ENCODE measurements at regions of chr7 and their contacts with region 1.

Region 1: GRCh38 chr7:142782922-142783900 is 12.4 kb downstream of the PRSS2 start:
- DNase-seq: peak; percentile 88
- ATAC-seq: peak; percentile 95
- H3K4me3 ChIP-seq: peak overlapping the region; percentile 28
- H3K27ac ChIP-seq: no peak overlapping the region
- H3K4me1 ChIP-seq: no peaks in the 10 kb centered on the region
- H3K27me3 ChIP-seq: no peaks in the 10 kb centered on the region
- CTCF ChIP-seq: peak; percentile 89

Region 2: DNA sequence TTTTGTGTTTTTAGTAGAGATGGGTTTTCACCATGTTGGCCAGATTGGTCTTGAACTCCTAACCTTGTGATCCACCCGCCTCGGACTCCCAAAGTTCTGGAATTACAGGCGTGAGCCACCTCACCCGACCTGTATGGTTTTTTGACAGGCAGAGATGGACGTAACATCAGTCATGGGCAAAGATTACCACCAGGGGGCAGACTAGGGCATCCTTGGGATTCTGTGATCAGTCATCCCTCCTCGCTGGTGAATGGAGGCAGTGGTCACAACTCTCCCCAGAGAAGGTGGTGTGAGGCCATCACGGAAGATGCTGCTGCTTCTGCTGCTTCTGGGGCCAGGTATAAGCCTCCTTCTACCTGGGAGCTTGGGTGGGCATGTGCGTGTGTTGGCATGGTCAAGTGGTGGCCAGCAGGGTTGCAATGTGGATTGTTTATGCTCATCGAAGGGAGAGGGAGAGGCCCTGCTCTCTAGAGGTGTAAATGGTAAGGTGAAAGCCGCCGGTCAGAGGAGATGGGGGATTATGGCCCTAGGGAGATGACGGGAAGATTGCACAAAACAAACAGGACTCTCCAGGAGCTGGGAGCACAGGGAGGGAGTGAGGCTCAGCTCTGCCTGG is 156.7 kb before region 1 on chr7:
- intact Hi-C with region 1: loop called (anchors 10 kb)
- DNase-seq: no peak
- ATAC-seq: peak; percentile 88
- H3K4me3 ChIP-seq: no peak overlapping the region
- H3K27ac ChIP-seq: no peak overlapping the region
- H3K4me1 ChIP-seq: no peaks in the 10 kb centered on the region
- H3K27me3 ChIP-seq: peaks cover 6% of the 10 kb centered on the region
- CTCF ChIP-seq: peak; percentile 66

Region 3: GRCh38 chr7:142636751-142637150 is 146.5 kb before region 1 on chr7:
- intact Hi-C with region 1: no loop called
- DNase-seq: no peak
- ATAC-seq: no peak
- H3K4me3 ChIP-seq: no peak overlapping the region
- H3K27ac ChIP-seq: no peak overlapping the region
- H3K4me1 ChIP-seq: no peaks in the 10 kb centered on the region
- H3K27me3 ChIP-seq: peaks cover 18% of the 10 kb centered on the region
- CTCF ChIP-seq: no peak

Measured in upper lobe of right lung (tissue), 1 donor.